ENCODE measurements at regions of chr3 and their contacts with region 1.

Region 1: DNA sequence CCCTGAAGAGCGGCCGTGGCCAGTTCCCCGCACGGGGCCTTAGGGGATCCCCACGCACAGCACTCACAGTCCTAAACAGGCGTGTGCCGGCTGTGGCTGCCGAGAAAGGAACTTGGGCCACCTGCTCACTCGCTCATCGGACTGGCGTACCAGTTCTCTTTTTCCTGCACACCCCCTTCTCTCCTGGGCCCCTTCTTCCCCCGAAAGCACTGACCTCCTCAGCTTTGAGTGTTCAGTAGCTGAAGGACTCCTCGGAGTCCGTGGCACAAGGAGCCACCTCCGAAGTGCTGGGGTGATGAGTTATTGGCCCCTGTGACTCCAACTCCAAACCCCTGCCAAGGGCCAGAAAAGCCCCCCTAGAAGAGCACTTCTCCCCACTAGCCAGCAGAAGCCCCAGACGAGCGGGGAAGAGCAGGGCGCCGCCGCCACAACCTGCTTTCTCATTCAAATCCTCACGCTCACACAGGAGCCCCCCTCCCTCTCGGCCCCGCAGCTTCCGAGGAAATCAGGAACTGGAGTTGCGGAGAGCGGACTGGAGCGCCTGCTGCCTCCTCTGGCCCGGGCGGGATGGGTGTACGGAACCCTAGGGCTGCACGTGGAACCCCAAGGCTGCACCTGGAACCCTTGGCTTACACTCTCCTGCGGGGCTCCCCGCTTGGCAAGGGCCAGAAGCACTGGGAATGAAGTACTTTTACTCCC is at the start of gene PLCH1:
- DNase-seq: peak; percentile 79 to 84
- H3K4me3 ChIP-seq: peak within 1 kb of the TSS; percentile 37 to 75 (median 73)
- H3K27ac ChIP-seq: peak within 1 kb of the TSS; percentile 85 to 87 (median 85)
- H3K4me1 ChIP-seq: peaks cover 8 to 25% of the 10 kb centered on the region in 2 donors
- H3K27me3 ChIP-seq: no peaks in the 10 kb centered on the region
- CTCF ChIP-seq: no peak
- POLR2A ChIP-seq: peak in 1 of 2 donors; percentile 73
- total RNA-seq, gene PLCH1: 4.3 to 20.6 (median 14.1) TPM

Region 2: DNA sequence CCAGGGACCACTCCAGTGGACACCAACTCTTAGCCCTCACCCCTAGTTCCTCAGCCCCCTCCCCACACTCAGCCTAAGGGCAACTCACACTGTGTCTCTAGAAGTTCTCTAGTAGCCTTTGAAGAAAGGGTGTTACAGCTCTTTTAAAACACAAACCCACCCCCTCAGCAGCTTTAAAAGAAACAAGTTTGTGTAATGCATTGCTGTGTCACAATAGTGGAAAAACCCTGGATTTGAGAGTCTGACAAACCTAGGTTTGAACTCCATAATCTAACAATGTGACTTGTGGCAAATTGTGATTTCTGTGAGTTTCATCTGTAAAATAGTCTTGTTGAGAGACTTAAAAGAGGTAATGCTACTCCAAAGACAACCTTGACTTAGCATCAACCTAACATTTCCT is 53.9 kb before region 1 on chr3:
- intact Hi-C with region 1: no loop called
- DNase-seq: no peak
- H3K4me3 ChIP-seq: no peak overlapping the region
- H3K27ac ChIP-seq: no peak overlapping the region
- H3K4me1 ChIP-seq: peaks cover 6 to 10% of the 10 kb centered on the region in 2 donors
- H3K27me3 ChIP-seq: no peaks in the 10 kb centered on the region
- CTCF ChIP-seq: no peak
- POLR2A ChIP-seq: no peak

Region 3: DNA sequence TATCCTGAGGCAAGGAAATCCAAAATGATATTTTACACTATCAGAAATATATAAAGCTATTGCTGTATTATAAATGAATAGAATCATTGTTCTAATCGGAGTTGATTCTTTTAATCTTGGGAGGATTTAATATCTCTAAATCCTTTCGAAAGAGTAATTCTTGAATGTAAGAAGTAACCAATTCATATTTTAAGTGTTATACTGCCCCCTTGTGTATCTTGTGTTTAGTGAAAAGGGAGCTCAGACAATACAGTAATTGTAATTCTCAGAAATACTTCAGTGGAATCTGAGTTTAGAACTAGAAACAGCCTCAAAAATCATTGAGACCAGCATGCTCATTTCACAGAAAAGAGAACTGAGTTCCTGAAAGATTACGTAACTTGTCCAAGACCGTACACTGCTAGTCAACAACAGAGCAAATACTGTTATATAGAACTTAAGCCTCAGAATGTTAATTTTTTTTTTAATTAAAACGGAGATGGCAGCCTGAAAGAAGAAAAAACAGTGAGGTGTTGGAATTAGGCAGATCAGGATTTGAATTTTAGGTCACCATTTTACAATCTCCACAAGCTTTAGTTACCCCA is 42.8 kb before region 1 on chr3:
- intact Hi-C with region 1: no loop called
- DNase-seq: no peak
- H3K4me3 ChIP-seq: no peak overlapping the region
- H3K27ac ChIP-seq: peak overlapping the region; percentile 83 to 97 (median 87)
- H3K4me1 ChIP-seq: peaks cover 20 to 26% of the 10 kb centered on the region in 2 donors
- H3K27me3 ChIP-seq: no peaks in the 10 kb centered on the region
- CTCF ChIP-seq: peak; percentile 24 to 93 (median 61)
- POLR2A ChIP-seq: no peak

Region 4: GRCh38 chr3:155854141-155854940 is 109.6 kb after region 1 on chr3 and contains the start of gene SLC33A1:
- intact Hi-C with region 1: loop called (anchors 10 kb)
- DNase-seq: peak; percentile 99 to 100
- H3K4me3 ChIP-seq: peak within 1 kb of the TSS; percentile 73 to 86 (median 80)
- H3K27ac ChIP-seq: peak within 1 kb of the TSS; percentile 83 to 91 (median 91)
- H3K4me1 ChIP-seq: peaks cover 34 to 39% of the 10 kb centered on the region in 2 donors
- H3K27me3 ChIP-seq: no peaks in the 10 kb centered on the region
- CTCF ChIP-seq: peak in 2 of 6 experiments; percentile 5 to 24
- POLR2A ChIP-seq: peak in 1 of 2 donors; percentile 85
- total RNA-seq, gene SLC33A1: 54.2 to 94.1 (median 69.0) TPM